ENCODE measurements at regions of chr12 and their contacts with region 1.

Region 1: GRCh38 chr12:26119391-26119981 is 5.4 kb downstream of the BHLHE41 start:
- DNase-seq: peak in 1 of 10 donors; percentile 17

Region 2: DNA sequence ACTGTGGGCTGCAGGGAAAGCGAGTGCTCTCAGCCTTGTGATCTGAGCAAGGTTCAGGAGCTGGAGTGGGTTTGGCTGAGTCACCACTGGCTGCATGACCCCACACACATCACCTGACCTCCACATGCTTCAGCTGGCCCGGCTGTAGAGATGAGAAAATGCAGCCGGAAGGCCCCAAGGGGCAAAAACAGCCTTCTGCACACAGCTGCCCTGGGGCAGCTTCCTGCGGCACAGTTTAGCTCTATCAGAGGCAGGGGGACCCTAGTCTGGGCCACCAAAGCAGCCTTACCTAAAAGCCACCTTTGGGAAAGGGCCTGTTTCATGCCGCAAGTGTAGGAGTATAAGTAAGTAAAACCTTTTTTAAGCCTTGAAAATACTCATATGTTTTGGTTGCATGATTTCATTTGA is 199.2 kb after region 1 on chr12:
- intact Hi-C with region 1: no loop called
- DNase-seq: no peak

Region 3: DNA sequence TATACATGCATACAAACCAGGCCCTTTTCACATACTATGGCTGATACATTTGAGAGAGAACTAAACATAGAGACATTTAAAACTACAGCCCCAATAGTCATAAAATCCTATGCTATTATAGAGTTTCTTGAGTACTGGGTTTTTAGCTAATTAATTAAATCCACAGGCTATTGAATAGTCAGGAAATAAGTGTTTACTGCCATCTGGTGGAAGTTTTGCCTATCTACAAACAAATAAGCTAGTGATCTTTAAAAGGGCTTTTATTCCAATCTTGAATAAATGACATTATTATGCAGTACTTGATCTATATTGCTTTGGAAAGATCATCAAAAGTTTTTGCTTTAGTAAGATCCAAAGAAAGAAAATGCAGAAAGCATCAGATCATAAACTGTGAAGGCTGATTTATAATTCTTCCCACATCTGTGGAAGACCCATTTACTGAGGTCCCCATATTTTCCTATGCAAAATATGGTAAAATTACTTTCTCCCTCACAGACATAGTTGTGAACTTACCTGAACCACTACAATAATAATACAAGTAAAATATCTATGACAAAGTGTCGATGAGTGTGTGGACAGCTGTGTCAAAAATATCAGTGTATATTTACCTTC is 582.2 kb after region 1 on chr12:
- intact Hi-C with region 1: loop called (anchors 5 kb)
- DNase-seq: no peak